GM12878 (cell line): ENCODE measurements at regions of chr9 and their contacts with region 1.

Region 1: DNA sequence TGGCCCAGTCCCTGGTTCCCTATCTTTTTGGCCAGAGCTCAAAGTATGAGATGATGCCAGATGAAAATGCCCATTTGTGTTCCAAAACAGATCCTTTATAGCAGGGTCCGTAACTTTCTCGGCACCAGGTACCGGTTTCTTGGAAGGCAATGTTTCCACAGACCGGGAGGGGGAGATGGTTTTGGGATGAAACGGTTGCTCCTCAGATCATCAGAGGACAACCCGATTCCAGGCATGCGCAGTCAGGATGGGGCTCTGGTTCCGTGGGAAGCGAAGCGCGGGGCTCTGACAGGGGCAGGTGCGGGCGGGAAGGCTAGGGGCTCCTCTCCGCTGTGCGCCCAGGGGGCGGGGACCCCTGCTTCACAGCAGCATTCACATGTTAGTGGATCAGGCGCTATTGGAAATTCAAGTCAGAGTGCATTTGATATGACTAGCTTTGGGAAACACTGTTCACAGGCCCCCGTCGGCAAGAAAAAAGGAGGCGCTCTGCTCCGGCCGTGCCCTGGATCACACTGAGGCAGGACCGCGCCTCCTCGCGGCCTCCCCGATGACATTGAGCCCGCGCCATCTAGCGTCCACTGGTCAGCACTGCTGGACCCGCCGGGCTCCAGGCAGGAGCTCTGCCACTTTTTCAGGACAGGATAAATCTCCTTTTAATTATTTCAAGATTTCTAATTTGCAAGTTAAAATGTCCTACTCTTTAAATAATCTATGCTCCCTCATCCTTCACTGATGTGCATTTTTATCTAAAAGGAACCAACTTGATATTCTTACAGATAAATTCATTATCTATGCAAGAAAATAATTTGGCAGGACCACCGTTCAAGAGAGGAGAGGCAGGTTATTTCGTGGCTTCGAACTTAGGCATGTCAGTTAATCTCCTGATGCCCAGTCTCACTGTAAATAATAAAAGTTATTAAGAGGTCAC is 190.0 kb downstream of the FANCC start:
- DNase-seq: no peak
- ATAC-seq: peak; percentile 97
- H3K4me3 ChIP-seq: no peak overlapping the region
- H3K27ac ChIP-seq: no peak overlapping the region
- H3K4me1 ChIP-seq: no peaks in the 10 kb centered on the region
- H3K27me3 ChIP-seq: no peaks in the 10 kb centered on the region
- CTCF ChIP-seq: peak; percentile 91 to 99 (median 96)
- EP300 ChIP-seq: no peak
- POLR2A ChIP-seq: no peak
- RAD21 ChIP-seq: peak; percentile 86

Region 2: DNA sequence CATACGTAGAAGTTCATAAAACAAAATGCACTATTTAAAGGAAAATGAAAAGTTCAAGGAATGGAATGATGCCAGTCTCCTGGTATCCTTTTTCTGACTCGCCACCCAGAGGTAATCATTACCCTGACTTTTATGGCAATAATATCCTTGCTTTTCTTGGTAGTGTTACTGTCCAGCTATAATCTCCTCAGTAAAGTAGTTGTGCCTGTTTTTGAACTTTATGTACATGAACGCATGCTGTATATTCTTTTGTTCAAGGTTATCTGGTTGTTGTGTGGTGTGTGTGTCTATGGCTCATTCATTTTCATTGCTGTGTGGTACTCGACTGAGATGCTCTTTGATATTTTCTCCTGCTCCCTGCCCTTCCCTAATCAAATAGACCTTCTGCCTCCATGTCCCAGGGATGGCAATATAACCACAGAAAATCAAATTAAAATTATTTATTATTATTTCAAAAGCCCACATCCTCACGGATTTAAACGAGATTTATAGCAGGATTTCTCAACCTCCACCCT is 459.0 kb before region 1 on chr9:
- CTCF ChIA-PET with region 1: interaction called, 99 read pairs
- POLR2A ChIA-PET with region 1: no interaction called
- RAD21 ChIA-PET with region 1: interaction called, 39 read pairs
- SMC1A ChIA-PET with region 1: interaction called, 36 read pairs
- in situ Hi-C with region 1: no loop called
- intact Hi-C with region 1: loop called (anchors 5 kb)
- DNase-seq: no peak
- ATAC-seq: peak; percentile 8; the same call in 2 of the 3 replicates
- H3K4me3 ChIP-seq: no peak overlapping the region
- H3K27ac ChIP-seq: no peak overlapping the region
- H3K4me1 ChIP-seq: no peaks in the 10 kb centered on the region
- H3K27me3 ChIP-seq: no peaks in the 10 kb centered on the region; a peak in 1 of 4 replicates
- CTCF ChIP-seq: no peak
- EP300 ChIP-seq: no peak
- POLR2A ChIP-seq: no peak
- RAD21 ChIP-seq: no peak

Region 3: GRCh38 chr9:94783102-94783664 is 344.3 kb before region 1 on chr9:
- CTCF ChIA-PET with region 1: interaction called, 196 read pairs
- POLR2A ChIA-PET with region 1: no interaction called
- RAD21 ChIA-PET with region 1: interaction called, 81 read pairs
- SMC1A ChIA-PET with region 1: interaction called, 95 read pairs
- in situ Hi-C with region 1: loop called (anchors 5 kb)
- intact Hi-C with region 1: loop called (anchors 1 kb)
- DNase-seq: peak; percentile 27
- ATAC-seq: peak; percentile 90
- H3K4me3 ChIP-seq: no peak overlapping the region
- H3K27ac ChIP-seq: no peak overlapping the region
- H3K4me1 ChIP-seq: no peaks in the 10 kb centered on the region
- H3K27me3 ChIP-seq: no peaks in the 10 kb centered on the region
- CTCF ChIP-seq: peak; percentile 48 to 80 (median 71); a peak in 5 of 6 replicates
- EP300 ChIP-seq: no peak
- POLR2A ChIP-seq: no peak
- RAD21 ChIP-seq: peak; percentile 91

Region 4: DNA sequence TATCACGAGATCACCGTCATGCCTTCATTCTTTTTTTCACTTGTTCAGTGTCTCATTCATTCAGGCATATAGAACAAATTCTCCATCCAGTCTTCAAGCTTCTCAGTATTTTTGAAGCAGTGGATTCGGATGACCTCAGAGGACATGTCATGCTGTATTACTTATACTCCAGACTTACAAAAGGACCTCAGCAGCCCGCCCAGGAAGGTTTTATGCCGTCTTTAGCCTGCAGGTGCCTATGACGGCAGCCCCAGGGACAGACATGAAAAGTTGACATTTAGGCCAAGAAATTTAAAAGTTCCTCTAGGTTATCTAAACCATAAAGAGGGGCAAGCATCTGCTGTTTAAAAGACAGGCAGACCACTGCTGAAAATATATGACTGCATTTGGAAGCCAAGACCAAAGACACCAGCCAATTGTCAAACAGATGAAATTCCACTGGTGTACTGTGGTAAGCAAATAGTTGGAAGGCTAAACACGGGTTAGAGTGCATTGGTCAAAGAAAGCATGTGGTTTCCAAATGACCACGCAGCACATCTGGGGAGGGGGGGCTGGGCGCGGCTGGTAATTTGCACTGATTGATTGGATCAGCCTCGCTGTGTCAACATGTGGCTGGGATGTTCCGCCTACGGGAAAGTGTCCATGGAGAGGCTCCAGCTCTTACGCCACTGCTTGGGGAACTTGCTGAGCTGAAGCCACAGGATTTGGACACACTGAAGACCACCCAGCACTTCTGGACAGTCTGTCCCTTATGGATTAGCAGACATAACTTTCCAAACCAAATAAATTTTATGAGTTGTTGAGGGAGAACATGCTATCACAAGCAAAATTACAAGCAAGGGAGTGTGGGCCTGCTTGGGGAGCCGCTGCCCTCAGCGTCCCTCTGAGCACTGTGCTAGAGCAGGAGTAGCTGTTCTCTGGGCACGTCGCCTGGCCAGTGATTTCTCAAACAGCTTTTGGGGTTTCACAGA is 16.4 kb after region 1 on chr9:
- CTCF ChIA-PET with region 1: interaction called, 19 read pairs
- POLR2A ChIA-PET with region 1: no interaction called
- RAD21 ChIA-PET with region 1: interaction called, 3 read pairs
- SMC1A ChIA-PET with region 1: interaction called, 6 read pairs
- in situ Hi-C with region 1: no loop called
- intact Hi-C with region 1: no loop called
- DNase-seq: no peak
- ATAC-seq: no peak
- H3K4me3 ChIP-seq: no peak overlapping the region
- H3K27ac ChIP-seq: no peak overlapping the region
- H3K4me1 ChIP-seq: no peaks in the 10 kb centered on the region
- H3K27me3 ChIP-seq: no peaks in the 10 kb centered on the region
- CTCF ChIP-seq: no peak
- EP300 ChIP-seq: no peak
- POLR2A ChIP-seq: no peak
- RAD21 ChIP-seq: no peak

Region 5: DNA sequence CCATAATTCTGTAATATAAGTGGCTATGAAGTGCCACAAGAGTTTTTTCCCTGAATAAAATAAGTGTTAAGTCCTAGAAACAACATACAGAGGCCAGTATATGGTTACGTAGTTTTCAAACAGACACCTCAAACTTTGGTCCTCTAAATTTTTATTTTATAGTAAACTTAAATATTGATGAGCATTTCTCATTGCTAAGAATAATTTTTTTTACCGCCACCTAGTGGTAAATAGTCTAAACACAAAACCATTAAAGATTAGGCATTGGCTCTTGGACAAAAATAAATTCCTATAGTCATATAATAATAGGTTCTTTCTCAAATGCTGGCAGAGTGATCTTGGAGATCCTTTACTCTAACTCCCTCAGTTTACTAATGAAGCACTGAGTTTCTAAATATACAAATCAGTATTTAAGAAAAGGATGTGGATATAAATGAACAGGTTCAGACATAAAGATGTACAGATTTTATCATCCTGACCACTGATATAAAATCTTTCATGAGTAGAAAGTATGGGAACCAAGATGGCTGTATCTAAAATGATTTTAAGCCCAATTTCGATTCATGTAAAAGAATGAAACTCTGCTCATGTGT is 53.8 kb after region 1 on chr9:
- CTCF ChIA-PET with region 1: interaction called, 14 read pairs
- POLR2A ChIA-PET with region 1: no interaction called
- RAD21 ChIA-PET with region 1: interaction called, 4 read pairs
- SMC1A ChIA-PET with region 1: interaction called, 3 read pairs
- in situ Hi-C with region 1: no loop called
- intact Hi-C with region 1: no loop called
- DNase-seq: no peak
- ATAC-seq: 0 out of 3 replicates have a peak, but pooled peaks have one; percentile 21
- H3K4me3 ChIP-seq: no peak overlapping the region
- H3K27ac ChIP-seq: no peak overlapping the region
- H3K4me1 ChIP-seq: no peaks in the 10 kb centered on the region
- H3K27me3 ChIP-seq: no peaks in the 10 kb centered on the region
- CTCF ChIP-seq: peak; percentile 21 to 47 (median 34); a peak in 4 of 6 replicates
- EP300 ChIP-seq: no peak
- POLR2A ChIP-seq: no peak
- RAD21 ChIP-seq: peak; percentile 22; the same call in 1 of the 2 replicates